Activated T-helper 2 cell treated with anti-CD3 and anti-CD28 coated beads, Interferon-gamma antibody, Interleukin-2, Interleukin-4, amounts not matched to agents 10 μg/mL and 5 μg/mL and 100 μg/mL, durations not matched to agents 14 hours and 24 hours and 36 hours (primary cell): ENCODE measurements at regions of chr20 and their contacts with region 1.

Region 1: GRCh38 chr20:407133-407952 is 756 bp upstream of the RBCK1 start:
- DNase-seq: peak; percentile 66
- H3K4me3 Mint-ChIP-seq: peak overlapping the region; percentile 86
- H3K27ac Mint-ChIP-seq: peak overlapping the region; percentile 89
- H3K4me1 Mint-ChIP-seq: peaks cover 40% of the 10 kb centered on the region
- H3K27me3 Mint-ChIP-seq: no peaks in the 10 kb centered on the region

Region 2: DNA sequence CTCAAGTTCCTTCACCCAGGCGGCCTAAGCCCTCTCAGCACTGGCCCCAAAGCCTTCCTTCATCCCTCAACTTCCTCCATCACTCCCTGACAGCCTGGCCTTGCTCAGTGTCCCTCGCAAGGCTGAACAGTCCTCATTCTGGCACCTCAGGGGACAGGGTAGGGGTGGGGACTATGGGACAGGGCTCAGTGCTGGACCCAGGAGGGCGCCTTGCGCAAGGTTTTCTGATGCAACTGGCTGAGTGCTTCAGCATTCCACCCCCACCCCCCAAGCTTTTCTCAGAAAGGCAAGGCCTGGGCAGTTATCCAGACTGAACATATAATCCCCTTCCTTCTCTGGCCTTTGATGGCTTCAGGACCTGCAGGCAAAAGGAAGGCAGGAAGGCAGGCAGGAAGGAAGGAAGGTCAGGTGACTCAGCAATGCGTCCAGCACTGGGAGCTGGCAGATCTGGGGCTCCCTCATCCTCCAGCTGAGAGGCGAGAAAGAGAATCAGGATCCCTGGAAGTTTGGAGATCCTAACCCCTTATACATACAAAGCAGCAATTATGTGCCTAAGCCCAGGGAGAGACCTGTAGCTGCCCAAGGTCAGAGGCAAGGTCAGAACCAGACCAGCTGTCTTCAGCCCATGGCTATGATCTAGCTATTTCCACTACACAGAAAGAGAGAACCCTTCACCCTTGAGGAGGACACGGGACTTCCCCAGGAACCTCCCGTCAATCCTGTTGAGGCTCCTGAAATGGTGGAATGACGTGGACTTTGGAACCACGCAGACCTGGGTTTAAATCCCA is 35.4 kb before region 1 on chr20:
- intact Hi-C with region 1: loop called (anchors 5 kb)
- DNase-seq: no peak
- H3K4me3 Mint-ChIP-seq: no peak overlapping the region
- H3K27ac Mint-ChIP-seq: peak overlapping the region; percentile 48
- H3K4me1 Mint-ChIP-seq: peaks cover 29% of the 10 kb centered on the region
- H3K27me3 Mint-ChIP-seq: no peaks in the 10 kb centered on the region

Region 3: GRCh38 chr20:431012-431904 is 23.9 kb after region 1 on chr20:
- intact Hi-C with region 1: loop called (anchors 1 kb)
- DNase-seq: no peak
- H3K4me3 Mint-ChIP-seq: peak overlapping the region; percentile 58
- H3K27ac Mint-ChIP-seq: peak overlapping the region; percentile 86
- H3K4me1 Mint-ChIP-seq: peaks cover 47% of the 10 kb centered on the region
- H3K27me3 Mint-ChIP-seq: no peaks in the 10 kb centered on the region

Region 4: GRCh38 chr20:478949-479429 is 71.6 kb after region 1 on chr20:
- intact Hi-C with region 1: loop called (anchors 5 kb)
- DNase-seq: no peak
- H3K4me3 Mint-ChIP-seq: no peak overlapping the region
- H3K27ac Mint-ChIP-seq: no peak overlapping the region
- H3K4me1 Mint-ChIP-seq: peaks cover 13% of the 10 kb centered on the region
- H3K27me3 Mint-ChIP-seq: no peaks in the 10 kb centered on the region

Region 5: GRCh38 chr20:517221-517620 is 109.9 kb after region 1 on chr20:
- intact Hi-C with region 1: no loop called
- DNase-seq: no peak
- H3K4me3 Mint-ChIP-seq: no peak overlapping the region
- H3K27ac Mint-ChIP-seq: no peak overlapping the region
- H3K4me1 Mint-ChIP-seq: peaks cover 10% of the 10 kb centered on the region
- H3K27me3 Mint-ChIP-seq: no peaks in the 10 kb centered on the region